T-cell (primary cell): ENCODE measurements at regions of chr11 and their contacts with region 1.

Region 1: GRCh38 chr11:95231127-95231880 is at the start of gene SESN3:
- DNase-seq: peak; percentile 95 to 99 (median 99)
- ATAC-seq: peak; percentile 86 to 90 (median 88)
- H3K4me3 ChIP-seq: peak within 1 kb of the TSS; percentile 84 to 86
- H3K4me3 Mint-ChIP-seq: peak within 1 kb of the TSS in 1 of 3 donors; percentile 93
- H3K27ac ChIP-seq: peak within 1 kb of the TSS; percentile 85
- H3K27ac Mint-ChIP-seq: peak within 1 kb of the TSS; percentile 83 to 88
- H3K4me1 ChIP-seq: peaks cover 12 to 30% of the 10 kb centered on the region in 2 experiments
- H3K4me1 Mint-ChIP-seq: peaks cover 58 to 68% (median 61%) of the 10 kb centered on the region in 3 donors
- H3K27me3 ChIP-seq: no peaks in the 10 kb centered on the region
- H3K27me3 Mint-ChIP-seq: no peaks in the 10 kb centered on the region
- total RNA-seq, gene SESN3: 61.5 to 150 (median 132) TPM

Region 2: GRCh38 chr11:95044010-95044409 is 187.3 kb before region 1 on chr11:
- CTCF ChIA-PET with region 1: no interaction called
- POLR2A ChIA-PET with region 1: no interaction called
- DNase-seq: no peak
- ATAC-seq: no peak
- H3K4me3 ChIP-seq: no peak overlapping the region
- H3K4me3 Mint-ChIP-seq: no peak overlapping the region
- H3K27ac ChIP-seq: no peak overlapping the region
- H3K27ac Mint-ChIP-seq: no peak overlapping the region
- H3K4me1 ChIP-seq: no peaks in the 10 kb centered on the region
- H3K4me1 Mint-ChIP-seq: no peaks in the 10 kb centered on the region
- H3K27me3 ChIP-seq: peaks cover 0 to 25% of the 10 kb centered on the region in 2 experiments
- H3K27me3 Mint-ChIP-seq: peaks cover 36 to 38% of the 10 kb centered on the region in 2 donors

Region 3: DNA sequence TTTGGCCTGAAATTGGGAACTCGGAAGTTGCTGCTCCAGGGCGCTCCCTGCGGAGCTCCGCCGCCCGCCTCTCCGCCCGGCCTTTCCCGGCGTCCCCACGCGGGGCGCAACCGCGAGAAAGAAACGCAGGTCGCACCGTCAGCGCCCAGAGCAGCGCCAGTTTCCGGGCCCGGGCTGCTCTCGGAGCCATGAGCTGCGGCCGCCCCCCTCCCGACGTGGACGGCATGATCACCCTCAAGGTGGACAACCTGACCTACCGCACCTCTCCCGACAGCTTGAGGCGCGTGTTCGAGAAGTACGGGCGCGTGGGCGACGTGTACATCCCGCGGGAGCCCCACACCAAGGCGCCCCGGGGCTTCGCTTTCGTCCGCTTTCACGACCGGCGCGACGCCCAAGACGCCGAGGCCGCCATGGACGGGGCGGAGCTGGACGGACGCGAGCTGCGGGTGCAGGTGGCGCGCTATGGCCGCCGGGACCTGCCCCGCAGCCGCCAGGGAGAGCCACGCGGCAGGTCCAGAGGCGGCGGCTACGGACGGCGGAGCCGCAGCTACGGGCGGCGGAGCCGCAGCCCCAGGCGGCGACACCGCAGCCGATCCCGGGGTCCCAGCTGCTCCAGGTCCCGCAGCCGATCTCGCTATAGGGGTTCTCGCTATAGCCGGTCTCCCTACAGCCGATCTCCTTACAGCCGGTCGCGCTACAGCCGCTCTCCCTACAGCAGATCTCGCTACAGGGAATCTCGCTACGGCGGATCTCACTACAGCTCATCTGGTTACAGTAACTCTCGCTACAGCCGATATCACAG is 164.1 kb before region 1 on chr11:
- CTCF ChIA-PET with region 1: interaction called, 3 to 5 read pairs
- POLR2A ChIA-PET with region 1: interaction called, 3 to 17 read pairs
- DNase-seq: peak; percentile 34 to 83 (median 60)
- ATAC-seq: peak; percentile 74 to 78 (median 77)
- H3K4me3 ChIP-seq: peak overlapping the region; percentile 72 to 93
- H3K4me3 Mint-ChIP-seq: peak overlapping the region; percentile 94 to 100 (median 97)
- H3K27ac ChIP-seq: peak overlapping the region; percentile 91
- H3K27ac Mint-ChIP-seq: peak overlapping the region; percentile 97 to 99
- H3K4me1 ChIP-seq: peaks cover 9% of the 10 kb centered on the region in 2 experiments
- H3K4me1 Mint-ChIP-seq: peaks cover 30 to 40% (median 31%) of the 10 kb centered on the region in 3 donors
- H3K27me3 ChIP-seq: no peaks in the 10 kb centered on the region
- H3K27me3 Mint-ChIP-seq: no peaks in the 10 kb centered on the region

Region 4: DNA sequence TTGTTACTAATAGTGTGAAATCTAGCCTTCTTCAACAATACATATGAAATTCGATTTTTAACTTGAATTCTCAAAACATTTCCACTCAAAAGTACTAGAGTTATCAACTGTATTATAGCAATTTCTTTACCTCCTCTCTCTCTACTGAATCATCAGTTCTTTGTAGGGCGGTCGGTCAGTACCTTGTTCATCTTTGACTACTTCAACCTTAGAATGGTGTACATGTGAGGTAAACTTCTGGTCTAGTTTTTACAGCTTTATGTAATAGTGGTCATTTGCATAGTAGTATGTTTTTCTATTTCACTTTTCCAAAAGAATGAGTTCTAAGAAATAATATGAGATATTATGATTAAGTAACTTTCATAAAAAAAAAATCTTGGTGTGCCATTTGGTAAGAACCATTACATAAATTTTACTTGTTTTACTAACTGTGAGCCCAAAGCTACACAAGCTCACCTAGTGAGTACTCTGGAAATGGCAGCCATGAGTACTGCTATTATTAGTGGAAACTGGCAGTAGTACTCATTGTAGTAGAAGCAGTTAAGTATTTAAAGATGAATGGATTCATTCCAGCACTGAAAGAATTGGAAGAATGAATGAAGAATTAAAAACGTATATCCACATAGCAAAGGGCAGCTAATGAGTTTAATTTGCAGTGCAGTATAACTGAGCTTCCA is 30.4 kb before region 1 on chr11:
- CTCF ChIA-PET with region 1: interaction called in 1 of 2 experiments, 11 read pairs
- POLR2A ChIA-PET with region 1: interaction called in 1 of 2 experiments, 9 read pairs
- DNase-seq: no peak
- ATAC-seq: no peak
- H3K4me3 ChIP-seq: no peak overlapping the region
- H3K4me3 Mint-ChIP-seq: no peak overlapping the region
- H3K27ac ChIP-seq: no peak overlapping the region
- H3K27ac Mint-ChIP-seq: no peak overlapping the region
- H3K4me1 ChIP-seq: no peaks in the 10 kb centered on the region
- H3K4me1 Mint-ChIP-seq: peaks cover 40 to 77% (median 76%) of the 10 kb centered on the region in 3 donors
- H3K27me3 ChIP-seq: no peaks in the 10 kb centered on the region
- H3K27me3 Mint-ChIP-seq: no peaks in the 10 kb centered on the region

Region 5: GRCh38 chr11:95254131-95254704 is 22.9 kb after region 1 on chr11:
- CTCF ChIA-PET with region 1: interaction called, 4 to 26 read pairs
- POLR2A ChIA-PET with region 1: interaction called, 12 to 30 read pairs
- DNase-seq: peak; percentile 57 to 91 (median 80)
- ATAC-seq: peak; percentile 99
- H3K4me3 ChIP-seq: peak overlapping the region; percentile 45 to 64
- H3K4me3 Mint-ChIP-seq: peak overlapping the region; percentile 76 to 80 (median 78)
- H3K27ac ChIP-seq: peak overlapping the region; percentile 73
- H3K27ac Mint-ChIP-seq: peak overlapping the region; percentile 84 to 93
- H3K4me1 ChIP-seq: peaks cover 31 to 38% of the 10 kb centered on the region in 2 experiments
- H3K4me1 Mint-ChIP-seq: peaks cover 40 to 51% (median 43%) of the 10 kb centered on the region in 3 donors
- H3K27me3 ChIP-seq: no peaks in the 10 kb centered on the region
- H3K27me3 Mint-ChIP-seq: no peaks in the 10 kb centered on the region

Region 6: GRCh38 chr11:95688580-95689189 is 457.4 kb after region 1 on chr11:
- CTCF ChIA-PET with region 1: interaction called in 1 of 2 experiments, 3 read pairs
- POLR2A ChIA-PET with region 1: interaction called in 1 of 2 experiments, 11 read pairs
- DNase-seq: peak in 9 of 35 experiments; percentile 6 to 56 (median 24)
- ATAC-seq: peak; percentile 79 to 86 (median 84)
- H3K4me3 ChIP-seq: no peak overlapping the region
- H3K4me3 Mint-ChIP-seq: no peak overlapping the region
- H3K27ac ChIP-seq: peak overlapping the region; percentile 62
- H3K27ac Mint-ChIP-seq: no peak overlapping the region
- H3K4me1 ChIP-seq: peaks cover 0 to 10% of the 10 kb centered on the region in 2 experiments
- H3K4me1 Mint-ChIP-seq: peaks cover 31 to 35% (median 33%) of the 10 kb centered on the region in 3 donors
- H3K27me3 ChIP-seq: no peaks in the 10 kb centered on the region
- H3K27me3 Mint-ChIP-seq: no peaks in the 10 kb centered on the region

Region 7: DNA sequence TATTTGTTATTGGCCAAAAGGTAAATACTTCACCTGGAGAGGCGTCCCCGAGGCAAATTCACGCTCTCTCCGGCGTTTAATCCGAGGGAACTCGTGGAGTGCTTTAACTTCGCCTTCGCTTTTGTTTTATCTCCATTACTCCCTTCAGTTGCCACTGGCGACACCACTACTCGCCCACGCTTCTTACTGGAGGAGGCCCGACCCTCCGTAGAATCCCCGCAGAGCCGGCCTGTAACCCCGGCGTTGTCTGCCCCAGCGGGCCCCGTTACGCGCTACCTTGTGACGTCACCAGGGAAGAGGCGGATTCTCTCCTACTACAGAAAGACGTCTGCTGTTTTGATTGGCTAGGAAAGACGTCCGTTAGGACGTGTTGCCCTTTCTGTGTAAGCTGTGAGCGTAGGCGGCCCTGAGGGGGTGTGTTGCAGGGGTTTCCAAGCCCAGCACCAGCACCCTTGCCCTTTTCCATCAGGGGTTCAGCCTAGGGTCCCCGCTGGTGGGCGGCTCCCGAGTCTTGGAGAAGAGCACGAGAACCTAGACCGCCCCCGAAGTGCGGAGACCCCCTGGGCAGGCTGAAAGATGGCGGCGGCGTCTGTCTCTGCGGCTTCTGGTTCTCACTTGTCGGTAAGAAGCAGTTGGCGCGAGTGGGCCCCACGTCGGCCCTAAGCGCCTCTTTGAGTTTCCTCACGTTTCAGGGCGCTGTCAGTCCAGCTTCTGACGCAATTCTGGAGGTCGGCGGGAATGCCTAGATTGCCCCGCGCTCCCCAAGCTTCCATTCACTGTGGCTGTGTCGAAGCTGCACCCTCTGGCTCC is 559.0 kb after region 1 on chr11 and contains the start of gene CEP57:
- CTCF ChIA-PET with region 1: interaction called in 1 of 2 experiments, 5 read pairs
- POLR2A ChIA-PET with region 1: interaction called in 1 of 2 experiments, 11 read pairs
- DNase-seq: peak; percentile 86 to 98 (median 93)
- ATAC-seq: peak; percentile 67 to 70 (median 69)
- H3K4me3 ChIP-seq: peak within 1 kb of the TSS; percentile 92 to 95
- H3K4me3 Mint-ChIP-seq: peak within 1 kb of the TSS; percentile 96 to 99 (median 99)
- H3K27ac ChIP-seq: peak within 1 kb of the TSS; percentile 99
- H3K27ac Mint-ChIP-seq: peak within 1 kb of the TSS; percentile 100
- H3K4me1 ChIP-seq: peaks cover 19 to 23% of the 10 kb centered on the region in 2 experiments
- H3K4me1 Mint-ChIP-seq: peaks cover 56 to 69% (median 68%) of the 10 kb centered on the region in 3 donors
- H3K27me3 ChIP-seq: no peaks in the 10 kb centered on the region
- H3K27me3 Mint-ChIP-seq: no peaks in the 10 kb centered on the region
- total RNA-seq, gene CEP57: 57.6 to 69.6 (median 65.0) TPM